Breast epithelium (tissue), 4 donors: ENCODE measurements at regions of chr15 and their contacts with region 1.

Region 1: GRCh38 chr15:89863918-89864317 is 29.9 kb downstream of the AP3S2 start:
- DNase-seq: no peak
- H3K4me3 ChIP-seq: no peak overlapping the region
- H3K27ac ChIP-seq: peak overlapping the region in 1 of 2 donors; percentile 13
- H3K4me1 ChIP-seq: no peaks in the 10 kb centered on the region
- H3K27me3 ChIP-seq: no peaks in the 10 kb centered on the region
- CTCF ChIP-seq: no peak
- POLR2A ChIP-seq: no peak

Region 2: DNA sequence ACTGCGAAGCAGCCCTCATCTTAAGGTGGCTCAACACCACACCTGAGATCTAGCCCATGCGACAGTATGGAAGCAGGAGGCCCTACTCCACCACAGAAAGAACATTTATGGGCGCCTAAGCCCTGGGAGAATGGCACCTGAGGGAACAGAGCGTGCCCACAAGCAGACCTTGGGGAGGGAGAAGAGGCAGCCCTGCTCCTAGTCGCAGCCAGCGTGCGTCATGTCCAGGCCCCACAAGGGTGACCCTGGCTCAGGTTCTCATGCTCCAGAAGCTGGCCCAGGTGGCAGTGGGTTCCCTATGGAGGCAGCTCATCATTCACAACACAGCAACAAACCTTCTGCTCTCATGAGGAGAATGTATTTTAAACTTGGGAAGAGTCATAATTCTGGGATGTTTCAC is 30.0 kb before region 1 on chr15:
- intact Hi-C with region 1: loop called (anchors 2 kb)
- DNase-seq: no peak
- H3K4me3 ChIP-seq: no peak overlapping the region
- H3K27ac ChIP-seq: peak overlapping the region; percentile 88 to 98
- H3K4me1 ChIP-seq: peaks cover 15 to 20% of the 10 kb centered on the region in 2 donors
- H3K27me3 ChIP-seq: no peaks in the 10 kb centered on the region
- CTCF ChIP-seq: no peak
- POLR2A ChIP-seq: no peak